CD14-positive monocyte (primary cell): ENCODE measurements at regions of chr7 and their contacts with region 1.

Region 1: DNA sequence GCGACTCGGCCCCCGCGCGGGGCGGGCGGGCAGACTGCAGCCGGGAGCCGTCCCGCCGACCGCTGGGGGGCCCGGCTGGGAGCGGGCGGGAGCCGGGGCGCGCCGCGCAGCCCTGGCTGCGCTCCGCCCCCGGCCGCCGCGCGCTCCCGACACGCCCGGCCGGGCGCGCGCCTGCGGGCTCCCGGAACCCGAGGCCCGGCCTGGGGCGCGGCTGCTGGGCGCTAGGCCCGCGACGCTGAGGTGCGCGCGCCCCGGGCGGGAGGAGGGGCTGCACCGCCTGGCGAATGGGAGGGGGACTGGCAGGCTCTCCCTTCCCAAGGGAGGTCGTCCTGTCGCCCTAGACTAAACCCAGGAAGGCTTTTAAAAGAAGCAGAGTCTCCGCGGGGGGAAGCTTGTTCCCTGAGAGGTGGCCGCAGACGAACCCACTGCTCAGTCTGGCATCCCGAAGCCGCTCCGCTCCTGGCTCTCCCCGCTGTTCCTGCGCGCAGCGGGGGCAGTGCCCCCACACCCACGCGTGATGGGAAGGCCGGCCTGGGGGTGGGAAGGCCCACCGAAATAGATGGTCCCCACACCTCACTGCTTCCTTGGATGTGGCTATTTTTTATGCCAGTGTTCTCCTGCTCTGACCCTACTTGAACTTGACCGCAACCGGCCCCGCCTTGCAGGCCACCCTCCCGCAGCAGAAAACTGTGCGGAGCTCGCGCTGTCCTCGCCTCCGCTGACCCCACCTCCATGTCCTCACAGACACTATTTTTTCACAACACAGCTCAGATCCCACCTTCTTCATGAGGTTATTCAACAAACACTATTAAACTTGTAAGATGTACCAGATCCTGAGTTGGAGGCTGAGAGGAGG is at the start of gene VOPP1:
- DNase-seq: peak; percentile 54 to 70 (median 61)
- H3K4me3 ChIP-seq: peak within 1 kb of the TSS; percentile 60 to 86 (median 66)
- H3K4me3 Mint-ChIP-seq: peak within 1 kb of the TSS; percentile 96 to 99
- H3K27ac ChIP-seq: peak within 1 kb of the TSS; percentile 75 to 88
- H3K27ac Mint-ChIP-seq: peak within 1 kb of the TSS; percentile 91 to 98 (median 96)
- H3K4me1 ChIP-seq: peaks cover 33 to 35% of the 10 kb centered on the region in 2 donors
- H3K4me1 Mint-ChIP-seq: peaks cover 46% of the 10 kb centered on the region
- H3K27me3 ChIP-seq: peaks cover 0 to 3% of the 10 kb centered on the region in 2 donors
- H3K27me3 Mint-ChIP-seq: peaks cover 11 to 13% (median 11%) of the 10 kb centered on the region in 3 donors
- CTCF ChIP-seq: no peak
- polyA plus RNA-seq, gene VOPP1: 16.7 to 22.1 (median 18.0) TPM

Region 2: GRCh38 chr7:55509322-55509721 is 63.3 kb before region 1 on chr7:
- intact Hi-C with region 1: loop called (anchors 2 to 5 kb)
- DNase-seq: peak; percentile 83 to 93 (median 84)
- H3K4me3 ChIP-seq: no peak overlapping the region
- H3K4me3 Mint-ChIP-seq: no peak overlapping the region
- H3K27ac ChIP-seq: peak overlapping the region in 1 of 2 donors; percentile 67
- H3K27ac Mint-ChIP-seq: peak overlapping the region; percentile 28 to 93 (median 81)
- H3K4me1 ChIP-seq: peaks cover 5 to 20% of the 10 kb centered on the region in 2 donors
- H3K4me1 Mint-ChIP-seq: peaks cover 24% of the 10 kb centered on the region
- H3K27me3 ChIP-seq: no peaks in the 10 kb centered on the region
- H3K27me3 Mint-ChIP-seq: no peaks in the 10 kb centered on the region
- CTCF ChIP-seq: no peak

Region 3: DNA sequence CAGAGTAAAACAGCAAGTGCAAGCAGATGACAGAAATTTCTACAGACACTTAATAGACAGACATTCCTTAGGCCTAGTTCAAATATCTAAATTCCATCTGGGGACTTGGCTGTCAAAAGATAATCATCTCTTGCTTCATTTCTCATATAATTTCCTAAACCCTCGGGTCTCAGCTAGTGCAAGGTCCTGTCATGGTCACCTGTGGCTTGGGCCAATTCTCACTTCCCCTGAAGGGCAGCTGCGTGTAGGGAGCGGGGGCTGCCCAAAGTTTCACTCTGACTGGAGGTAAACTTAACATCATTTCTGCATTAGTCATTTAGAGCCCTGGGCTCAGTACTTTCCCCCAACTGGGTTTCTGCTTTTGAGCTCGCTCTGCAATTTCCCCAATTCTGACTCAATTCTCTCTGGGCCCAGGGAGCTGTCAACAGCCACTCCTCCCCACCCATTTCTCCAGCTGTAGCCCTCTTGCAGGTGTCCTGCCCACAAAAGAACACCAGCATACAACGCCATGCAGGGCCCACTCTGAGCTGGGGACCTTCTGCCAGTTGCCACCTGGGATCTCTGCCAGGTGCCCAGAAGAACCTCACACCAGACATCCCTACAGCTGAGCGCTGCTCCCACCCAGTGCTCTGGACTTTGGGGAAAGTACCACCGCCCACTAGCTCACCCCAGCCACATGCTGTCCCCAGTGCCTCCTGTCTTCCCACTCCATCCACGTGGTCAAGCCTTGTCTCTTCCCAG is 38.3 kb before region 1 on chr7:
- intact Hi-C with region 1: loop called in 1 of 2 experiments (anchors 2 kb)
- DNase-seq: peak; percentile 97 to 100 (median 99)
- H3K4me3 ChIP-seq: no peak overlapping the region
- H3K4me3 Mint-ChIP-seq: peak overlapping the region; percentile 58 to 71
- H3K27ac ChIP-seq: peak overlapping the region; percentile 97 to 98
- H3K27ac Mint-ChIP-seq: peak overlapping the region; percentile 98 to 99 (median 99)
- H3K4me1 ChIP-seq: peaks cover 66 to 71% of the 10 kb centered on the region in 2 donors
- H3K4me1 Mint-ChIP-seq: peaks cover 75% of the 10 kb centered on the region
- H3K27me3 ChIP-seq: no peaks in the 10 kb centered on the region
- H3K27me3 Mint-ChIP-seq: peaks cover 0 to 2% (median 0%) of the 10 kb centered on the region in 3 donors
- CTCF ChIP-seq: no peak

Region 4: GRCh38 chr7:55552320-55553023 is 20.1 kb before region 1 on chr7:
- intact Hi-C with region 1: loop called in 1 of 2 experiments (anchors 2 kb)
- DNase-seq: peak; percentile 86 to 91 (median 89)
- H3K4me3 ChIP-seq: peak overlapping the region in 1 of 3 experiments; percentile 24
- H3K4me3 Mint-ChIP-seq: peak overlapping the region; percentile 60 to 72
- H3K27ac ChIP-seq: peak overlapping the region; percentile 34 to 66
- H3K27ac Mint-ChIP-seq: peak overlapping the region; percentile 46 to 92 (median 83)
- H3K4me1 ChIP-seq: peaks cover 13 to 14% of the 10 kb centered on the region in 2 donors
- H3K4me1 Mint-ChIP-seq: peaks cover 49% of the 10 kb centered on the region
- H3K27me3 ChIP-seq: no peaks in the 10 kb centered on the region
- H3K27me3 Mint-ChIP-seq: no peaks in the 10 kb centered on the region
- CTCF ChIP-seq: no peak

Region 5: GRCh38 chr7:56019501-56019900 is 446.9 kb after region 1 on chr7:
- intact Hi-C with region 1: no loop called
- DNase-seq: no peak
- H3K4me3 ChIP-seq: no peak overlapping the region
- H3K4me3 Mint-ChIP-seq: no peak overlapping the region
- H3K27ac ChIP-seq: no peak overlapping the region
- H3K27ac Mint-ChIP-seq: no peak overlapping the region
- H3K4me1 ChIP-seq: no peaks in the 10 kb centered on the region
- H3K4me1 Mint-ChIP-seq: no peaks in the 10 kb centered on the region
- H3K27me3 ChIP-seq: no peaks in the 10 kb centered on the region
- H3K27me3 Mint-ChIP-seq: peaks cover 0 to 2% (median 0%) of the 10 kb centered on the region in 3 donors
- CTCF ChIP-seq: no peak